ENCODE measurements at regions of chr3 and their contacts with region 1.

Region 1: DNA sequence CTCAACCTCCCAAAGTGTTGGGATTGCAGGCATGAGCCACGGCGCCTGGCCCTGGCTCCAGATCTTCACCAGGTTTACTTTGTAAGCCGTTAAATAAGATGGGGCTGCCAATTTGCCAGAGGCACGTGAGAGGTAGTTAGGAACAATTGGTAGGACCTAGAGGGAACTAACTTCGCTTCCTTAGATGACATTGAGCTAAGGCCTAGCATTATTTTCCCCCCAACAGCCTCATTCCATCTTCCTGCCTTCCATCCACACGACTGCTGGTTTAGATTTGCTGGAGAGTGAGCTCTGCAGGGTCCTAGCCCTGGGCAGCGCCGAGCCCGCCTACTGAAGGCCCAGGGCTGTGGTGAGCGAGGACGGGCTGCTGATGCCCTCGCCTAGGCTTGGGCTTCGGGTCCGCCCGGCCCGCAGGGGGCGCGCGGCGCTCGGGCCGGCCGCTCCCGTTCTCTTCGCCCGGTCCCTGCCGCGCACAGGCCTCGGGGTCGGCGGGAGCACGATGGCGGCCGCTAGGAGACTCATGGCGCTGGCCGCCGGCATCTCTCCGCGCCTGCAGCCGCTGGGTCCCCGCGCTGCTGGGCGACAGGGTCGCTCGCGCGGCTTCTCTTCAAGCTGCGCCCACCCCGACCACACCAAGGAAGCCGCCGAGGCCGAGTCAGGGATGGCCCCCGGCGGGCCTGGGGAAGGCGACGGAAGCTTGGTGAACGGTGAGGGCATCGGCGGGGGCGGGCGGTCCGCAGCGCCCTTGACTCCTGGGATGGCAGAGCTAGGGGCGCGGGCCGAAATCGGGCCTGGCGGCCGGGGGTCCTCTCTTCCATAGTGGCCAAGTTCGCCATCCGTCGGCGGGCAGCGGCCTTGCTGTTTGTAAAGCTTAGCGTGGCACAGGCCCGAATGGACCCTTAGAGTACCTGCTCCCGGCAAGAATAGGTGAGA is 21.9 kb downstream of the DHX30 start:
- DNase-seq: peak; percentile 77
- H3K4me3 Mint-ChIP-seq: peak overlapping the region; percentile 95
- H3K27ac Mint-ChIP-seq: peak overlapping the region; percentile 83
- H3K4me1 Mint-ChIP-seq: peaks cover 34% of the 10 kb centered on the region
- H3K27me3 Mint-ChIP-seq: no peaks in the 10 kb centered on the region

Region 2: DNA sequence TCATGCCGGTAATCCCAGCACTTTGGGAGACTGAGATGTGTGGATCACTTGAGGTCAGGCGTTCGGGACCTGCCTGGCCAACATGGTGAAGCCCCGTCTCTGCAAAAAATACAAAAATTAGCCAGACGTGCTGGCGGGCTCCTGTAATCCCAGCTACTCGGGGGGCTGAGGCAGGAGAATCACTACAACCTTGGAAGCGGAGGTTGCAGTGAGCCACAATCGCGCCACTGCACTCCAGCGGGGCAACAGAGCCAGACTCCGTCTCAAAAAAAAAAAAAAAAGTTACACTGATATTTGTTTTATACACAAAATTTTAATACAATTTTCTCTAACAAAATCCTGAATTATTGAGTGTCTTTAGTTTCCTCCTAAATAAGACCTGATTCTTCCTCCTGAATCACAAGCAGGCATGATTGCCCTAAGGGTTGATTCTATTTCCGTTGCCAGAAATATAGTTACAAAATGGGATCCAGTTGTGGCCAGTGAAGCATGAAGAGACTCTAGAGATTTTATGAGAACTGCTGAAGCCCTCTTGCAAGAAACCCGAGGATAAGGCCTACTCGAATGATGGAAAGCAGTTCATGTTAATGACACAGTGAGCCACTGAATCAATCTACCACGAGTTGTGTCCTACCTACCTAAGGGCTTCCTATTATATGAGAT is 33.5 kb before region 1 on chr3:
- intact Hi-C with region 1: loop called (anchors 1 kb)
- DNase-seq: no peak
- H3K4me3 Mint-ChIP-seq: no peak overlapping the region
- H3K27ac Mint-ChIP-seq: no peak overlapping the region
- H3K4me1 Mint-ChIP-seq: no peaks in the 10 kb centered on the region
- H3K27me3 Mint-ChIP-seq: no peaks in the 10 kb centered on the region

Region 3: GRCh38 chr3:47802734-47803477 is 21.9 kb before region 1 on chr3 and contains the start of gene DHX30:
- intact Hi-C with region 1: loop called (anchors 1 kb)
- DNase-seq: peak; percentile 82
- H3K4me3 Mint-ChIP-seq: peak within 1 kb of the TSS; percentile 93
- H3K27ac Mint-ChIP-seq: peak within 1 kb of the TSS; percentile 95
- H3K4me1 Mint-ChIP-seq: peaks cover 19% of the 10 kb centered on the region
- H3K27me3 Mint-ChIP-seq: no peaks in the 10 kb centered on the region
- total RNA-seq, gene DHX30: 149 and 154 TPM in 2 replicates

Region 4: DNA sequence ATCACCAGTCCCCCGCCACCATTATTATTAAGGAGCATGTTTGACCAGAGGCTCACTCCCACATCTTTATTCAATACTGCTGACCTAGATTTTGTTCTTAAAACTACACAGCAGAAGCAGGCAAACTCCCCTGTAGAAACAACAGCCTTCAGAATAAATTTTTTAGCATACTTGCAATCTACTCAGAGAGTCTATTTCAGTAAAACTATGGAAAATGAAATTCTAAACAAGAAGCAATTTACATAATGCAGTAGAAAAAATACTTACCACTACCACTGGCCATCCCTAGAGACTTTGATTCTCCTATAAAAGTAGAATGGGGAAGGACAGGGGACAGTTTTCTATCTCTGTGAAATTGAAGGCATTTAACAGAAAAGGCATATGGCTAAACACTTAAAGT is 115.4 kb after region 1 on chr3:
- intact Hi-C with region 1: no loop called
- DNase-seq: no peak
- H3K4me3 Mint-ChIP-seq: no peak overlapping the region
- H3K27ac Mint-ChIP-seq: no peak overlapping the region
- H3K4me1 Mint-ChIP-seq: peaks cover 6% of the 10 kb centered on the region
- H3K27me3 Mint-ChIP-seq: no peaks in the 10 kb centered on the region

Region 5: DNA sequence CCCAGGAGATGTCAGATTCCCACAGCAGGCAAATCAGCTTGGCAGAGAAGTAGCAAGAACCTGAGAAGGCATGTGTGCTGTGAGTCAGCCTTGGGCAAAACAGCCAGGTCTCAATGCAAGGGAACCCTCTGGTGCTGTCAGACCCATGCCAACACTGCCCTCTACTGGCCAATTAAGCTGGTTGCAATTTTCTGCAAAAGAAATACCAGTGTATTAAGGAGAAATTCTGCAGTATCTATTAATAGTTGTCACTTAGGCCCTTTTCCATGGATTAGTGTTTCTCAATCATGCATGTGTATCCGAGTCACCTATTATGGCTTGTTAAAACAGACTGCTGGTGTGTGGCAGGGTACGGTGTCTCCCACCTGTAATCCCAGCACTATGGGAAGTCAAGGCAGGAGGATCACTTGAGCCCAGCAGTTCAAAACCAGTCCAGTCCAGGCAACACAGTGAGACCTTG is 165.2 kb after region 1 on chr3:
- intact Hi-C with region 1: loop called (anchors 1 kb)
- DNase-seq: peak; percentile 54
- H3K4me3 Mint-ChIP-seq: no peak overlapping the region
- H3K27ac Mint-ChIP-seq: no peak overlapping the region
- H3K4me1 Mint-ChIP-seq: peaks cover 11% of the 10 kb centered on the region
- H3K27me3 Mint-ChIP-seq: no peaks in the 10 kb centered on the region

Region 6: GRCh38 chr3:48088749-48089466 is 264.1 kb after region 1 on chr3:
- intact Hi-C with region 1: loop called (anchors 5 kb)
- DNase-seq: peak; percentile 94
- H3K4me3 Mint-ChIP-seq: peak overlapping the region; percentile 97
- H3K27ac Mint-ChIP-seq: peak overlapping the region; percentile 99
- H3K4me1 Mint-ChIP-seq: peaks cover 35% of the 10 kb centered on the region
- H3K27me3 Mint-ChIP-seq: peaks cover 7% of the 10 kb centered on the region

Region 7: DNA sequence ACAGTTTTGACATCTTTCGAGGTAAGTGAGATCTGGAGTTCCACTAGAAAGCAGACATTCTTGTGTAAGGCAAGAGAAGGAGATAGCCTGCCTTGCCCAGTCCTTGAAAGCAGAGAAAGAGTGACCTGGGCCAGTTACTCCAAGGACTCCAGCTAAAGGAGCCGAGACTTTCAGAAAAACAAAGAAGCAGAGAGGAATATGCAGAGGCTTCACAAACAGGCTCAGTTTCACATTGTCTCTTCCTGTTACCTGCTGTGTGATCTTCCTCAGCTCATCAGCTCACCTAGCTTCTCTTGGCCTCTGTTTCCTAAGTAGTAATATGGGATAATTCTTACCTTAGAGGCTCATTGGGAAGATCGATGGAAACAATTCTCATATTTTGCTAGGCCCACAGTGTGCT is 282.4 kb after region 1 on chr3:
- intact Hi-C with region 1: no loop called
- DNase-seq: no peak
- H3K4me3 Mint-ChIP-seq: no peak overlapping the region
- H3K27ac Mint-ChIP-seq: no peak overlapping the region
- H3K4me1 Mint-ChIP-seq: peaks cover 11% of the 10 kb centered on the region
- H3K27me3 Mint-ChIP-seq: peaks cover 2% of the 10 kb centered on the region